ENCODE measurements at regions of chr19 and their contacts with region 1.

Region 1: DNA sequence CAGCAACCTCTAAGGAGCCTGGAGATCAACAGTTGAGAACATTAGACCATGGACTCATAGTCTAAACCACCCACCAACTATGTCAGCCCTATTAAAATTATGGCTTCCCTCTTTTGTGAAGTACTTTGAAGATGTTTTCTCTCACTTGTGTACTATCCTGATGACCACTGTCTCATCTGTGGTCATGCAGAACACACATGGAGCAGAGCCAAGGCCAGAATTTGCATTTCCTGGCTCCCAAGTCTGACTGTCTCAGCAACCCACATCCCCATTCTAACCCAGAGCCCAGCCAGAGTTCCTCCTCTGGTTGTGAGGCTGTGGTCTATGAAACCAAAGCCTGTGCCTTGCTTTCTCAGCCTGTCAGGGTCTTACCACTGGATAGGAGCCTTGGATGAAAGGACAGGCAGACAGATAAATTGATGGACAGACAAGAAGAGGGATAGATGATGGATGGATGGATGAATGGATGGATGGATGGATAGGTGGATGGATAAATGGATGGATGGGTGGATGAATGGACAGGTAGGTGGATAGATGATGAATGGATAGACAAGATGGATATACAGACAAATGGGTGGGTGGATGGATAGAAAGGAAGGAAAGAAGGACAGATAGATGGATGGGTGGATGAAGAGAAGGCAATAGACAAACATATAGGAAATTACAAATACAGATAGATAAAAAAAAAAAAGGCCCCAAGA is 35.4 kb downstream of the ZNF557 start:
- DNase-seq: no peak
- ATAC-seq: no peak
- H3K4me3 ChIP-seq: no peak overlapping the region
- H3K27ac ChIP-seq: no peak overlapping the region
- H3K4me1 ChIP-seq: no peaks in the 10 kb centered on the region
- H3K27me3 ChIP-seq: no peaks in the 10 kb centered on the region
- CTCF ChIP-seq: no peak

Region 2: DNA sequence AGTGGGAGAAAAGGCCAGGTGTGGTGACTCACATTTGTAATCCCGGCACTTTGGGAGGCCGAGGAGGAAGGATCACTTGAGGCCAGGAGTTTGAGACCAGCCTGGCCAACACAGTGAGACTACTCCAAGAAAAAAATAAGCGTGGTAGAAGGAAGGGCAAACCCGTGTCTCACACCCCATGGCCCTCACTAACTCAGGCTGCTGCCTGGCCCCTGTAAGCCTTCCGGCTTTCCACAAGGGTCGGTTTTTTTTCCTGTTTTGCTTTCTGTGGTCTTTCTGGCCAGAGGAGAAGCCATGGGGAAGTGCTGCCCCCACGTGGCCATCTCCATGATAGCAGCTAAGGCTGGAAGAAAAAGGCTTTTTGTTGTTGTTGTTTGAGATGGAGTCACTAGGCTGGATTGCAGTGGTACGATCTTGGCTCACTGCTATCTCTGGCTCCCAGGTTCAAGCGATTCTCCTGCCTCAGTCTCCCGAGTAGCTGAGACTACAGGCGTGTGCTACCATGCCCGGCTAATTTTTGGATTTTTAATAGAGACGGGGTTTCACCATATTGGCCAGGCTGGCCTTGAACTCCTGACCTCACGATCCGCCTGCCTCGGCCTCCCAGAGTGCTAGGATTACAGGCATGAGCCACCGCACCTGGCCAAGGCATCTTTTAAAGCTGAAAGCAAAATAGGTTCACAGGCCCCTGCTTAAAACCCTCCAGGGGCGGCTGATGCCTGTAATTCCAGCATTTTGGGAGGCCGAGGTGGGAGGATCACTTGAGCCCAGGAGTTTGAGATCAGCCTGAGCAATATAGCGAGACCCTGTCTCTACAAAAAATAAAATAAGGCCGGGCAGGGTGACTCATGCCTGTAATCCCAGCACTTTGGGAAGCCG is 236.3 kb after region 1 on chr19:
- intact Hi-C with region 1: loop called (anchors 5 kb)
- DNase-seq: peak; percentile 87
- ATAC-seq: peak; percentile 83
- H3K4me3 ChIP-seq: no peak overlapping the region
- H3K27ac ChIP-seq: no peak overlapping the region
- H3K4me1 ChIP-seq: peaks cover 5% of the 10 kb centered on the region
- H3K27me3 ChIP-seq: no peaks in the 10 kb centered on the region
- CTCF ChIP-seq: peak; percentile 94